Testis (tissue), 5 donors: ENCODE measurements at regions of chr6 and their contacts with region 1.

Region 1: GRCh38 chr6:1596088-1596852 is 13.4 kb upstream of the FOXC1 start:
- DNase-seq: peak; percentile 78
- H3K4me3 ChIP-seq: no peak overlapping the region
- H3K27ac ChIP-seq: no peak overlapping the region
- H3K4me1 ChIP-seq: no peaks in the 10 kb centered on the region
- H3K27me3 ChIP-seq: no peaks in the 10 kb centered on the region
- CTCF ChIP-seq: peak; percentile 84 to 95 (median 92)
- POLR2A ChIP-seq: no peak

Region 2: GRCh38 chr6:2346078-2346477 is 749.8 kb after region 1 on chr6:
- intact Hi-C with region 1: loop called (anchors 5 kb)
- DNase-seq: no peak
- H3K4me3 ChIP-seq: no peak overlapping the region
- H3K27ac ChIP-seq: no peak overlapping the region
- H3K4me1 ChIP-seq: no peaks in the 10 kb centered on the region
- H3K27me3 ChIP-seq: no peaks in the 10 kb centered on the region
- CTCF ChIP-seq: no peak
- POLR2A ChIP-seq: no peak

Region 3: DNA sequence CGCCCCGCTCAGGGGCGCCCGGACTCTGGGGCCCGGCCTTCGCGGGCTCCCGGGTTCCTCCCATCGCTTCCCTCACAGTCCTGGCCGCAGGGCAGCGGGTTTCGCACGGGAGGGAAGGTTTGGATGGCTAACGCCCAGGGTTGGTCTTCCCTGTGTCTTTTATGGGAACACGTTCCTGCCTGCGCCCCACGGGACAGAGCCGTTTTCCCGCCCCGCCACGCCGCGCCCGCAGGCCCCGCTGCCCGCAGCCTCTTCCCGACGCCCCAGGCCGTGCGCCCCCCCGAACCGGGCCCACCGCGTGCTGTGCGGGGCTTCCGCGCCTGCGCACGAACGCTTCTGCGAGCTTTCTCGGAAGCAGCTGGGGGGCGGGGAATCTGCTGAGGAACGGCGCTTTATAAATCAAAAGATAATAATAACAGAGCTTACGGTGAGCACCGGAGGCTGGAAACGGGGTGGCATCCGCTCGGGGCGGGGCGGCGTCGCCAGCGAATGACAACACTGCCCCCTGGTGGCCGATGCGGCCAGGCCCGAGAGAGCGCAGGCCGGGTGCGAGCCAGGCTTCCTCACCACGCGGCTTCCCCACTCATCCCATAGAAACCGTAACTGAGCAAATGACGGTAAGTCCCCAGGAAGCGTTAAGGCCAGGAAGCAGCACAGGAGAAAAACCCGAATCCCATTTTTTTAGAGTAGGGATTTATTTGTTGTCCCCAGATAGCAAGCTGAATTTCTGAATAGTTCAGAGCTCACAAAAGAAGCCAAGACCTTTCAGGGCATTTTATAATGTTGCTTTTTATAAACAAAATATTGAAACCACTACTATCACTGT is 1038.1 kb after region 1 on chr6:
- intact Hi-C with region 1: loop called (anchors 10 kb)
- DNase-seq: peak; percentile 90
- H3K4me3 ChIP-seq: peak overlapping the region; percentile 66 to 73
- H3K27ac ChIP-seq: peak overlapping the region; percentile 87
- H3K4me1 ChIP-seq: peaks cover 12% of the 10 kb centered on the region
- H3K27me3 ChIP-seq: no peaks in the 10 kb centered on the region
- CTCF ChIP-seq: peak; percentile 97 to 100 (median 98)
- POLR2A ChIP-seq: no peak